ENCODE measurements at regions of chr2 and their contacts with region 1.

Region 1: DNA sequence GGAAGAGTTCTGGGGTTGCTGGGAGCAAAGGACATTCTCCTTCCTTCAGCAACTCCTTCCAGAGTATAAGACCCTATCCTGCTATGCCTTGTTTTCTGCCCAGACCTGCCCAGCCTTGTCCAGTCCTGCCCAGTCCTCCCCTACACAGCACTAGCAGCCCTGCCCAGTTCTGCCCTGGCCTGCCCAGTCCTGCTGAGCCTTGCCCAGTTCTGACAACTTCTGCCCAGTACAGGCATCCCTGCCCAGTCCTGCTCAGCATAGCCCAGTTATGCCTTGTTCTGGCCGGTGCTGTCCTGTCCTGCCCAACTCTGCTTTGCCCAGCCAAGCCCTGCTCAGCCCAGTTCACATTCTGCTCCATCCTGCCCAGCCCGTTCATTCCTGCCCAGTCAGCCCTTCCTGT is 44.9 kb upstream of the ALK start:
- DNase-seq: no peak
- H3K4me3 ChIP-seq: no peak overlapping the region
- H3K27ac ChIP-seq: no peak overlapping the region
- H3K4me1 ChIP-seq: no peaks in the 10 kb centered on the region
- H3K27me3 ChIP-seq: no peaks in the 10 kb centered on the region
- CTCF ChIP-seq: no peak
- POLR2A ChIP-seq: no peak

Region 2: GRCh38 chr2:30030361-30030760 is 64.1 kb after region 1 on chr2:
- intact Hi-C with region 1: loop called (anchors 2 kb)
- DNase-seq: no peak
- H3K4me3 ChIP-seq: no peak overlapping the region
- H3K27ac ChIP-seq: peak overlapping the region in 1 of 2 donors; percentile 12
- H3K4me1 ChIP-seq: peaks cover 0 to 6% of the 10 kb centered on the region in 2 donors
- H3K27me3 ChIP-seq: peaks cover 0 to 8% of the 10 kb centered on the region in 2 donors
- CTCF ChIP-seq: no peak
- POLR2A ChIP-seq: no peak